Activated B cell treated with CpG ODN at 0.5 μM for 24 hours (primary cell): ENCODE measurements at regions of chr1 and their contacts with region 1.

Region 1: DNA sequence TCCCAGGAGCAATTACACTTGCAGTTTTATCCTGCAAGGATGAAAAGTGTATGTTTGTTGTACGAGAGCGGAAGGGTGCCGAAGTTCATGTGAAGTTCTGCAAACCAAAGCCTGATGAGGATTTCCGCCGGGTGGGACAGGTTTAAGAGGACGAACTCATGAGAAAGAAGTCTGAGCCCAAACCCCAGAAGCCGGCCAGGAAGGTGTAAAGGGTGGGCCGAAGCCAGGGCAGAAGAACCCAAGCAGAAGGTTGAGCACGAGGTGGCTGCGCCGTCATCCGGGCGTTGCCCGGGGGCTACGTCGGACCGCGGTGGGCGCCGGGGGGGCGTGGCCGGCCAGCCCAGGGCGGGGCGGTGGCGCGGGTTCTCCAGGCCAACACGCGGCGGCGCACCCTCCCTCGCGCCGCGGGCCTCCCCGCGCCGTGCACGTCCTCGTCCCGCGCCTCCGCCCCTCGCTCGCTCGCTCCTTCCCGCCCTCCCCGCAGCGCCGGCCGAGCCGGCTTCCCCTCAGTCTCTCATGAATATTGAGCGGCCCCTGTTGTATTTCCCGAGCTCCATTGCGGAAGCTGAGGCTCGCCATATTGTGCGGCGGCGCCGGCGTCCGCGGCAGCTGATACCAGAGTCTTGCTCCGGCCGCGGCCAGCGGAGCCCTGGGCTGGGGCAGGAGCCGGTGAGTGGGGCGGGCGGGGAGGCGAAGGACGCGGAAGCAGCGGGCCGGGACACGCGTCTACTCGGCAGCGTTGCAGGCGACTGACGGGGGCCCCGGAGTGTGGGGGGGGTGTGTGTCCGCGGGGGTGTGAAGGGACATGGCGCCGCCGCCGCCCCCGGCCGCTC is at the start of gene RNF2:
- DNase-seq: peak; percentile 84
- ATAC-seq: peak; percentile 92
- H3K4me3 Mint-ChIP-seq: peak within 1 kb of the TSS; percentile 92
- H3K27ac Mint-ChIP-seq: peak within 1 kb of the TSS; percentile 91
- H3K4me1 Mint-ChIP-seq: peaks cover 31% of the 10 kb centered on the region
- H3K27me3 Mint-ChIP-seq: no peaks in the 10 kb centered on the region
- CTCF ChIP-seq: no peak
- total RNA-seq, gene RNF2: 23.4 and 24.5 TPM in 2 replicates

Region 2: DNA sequence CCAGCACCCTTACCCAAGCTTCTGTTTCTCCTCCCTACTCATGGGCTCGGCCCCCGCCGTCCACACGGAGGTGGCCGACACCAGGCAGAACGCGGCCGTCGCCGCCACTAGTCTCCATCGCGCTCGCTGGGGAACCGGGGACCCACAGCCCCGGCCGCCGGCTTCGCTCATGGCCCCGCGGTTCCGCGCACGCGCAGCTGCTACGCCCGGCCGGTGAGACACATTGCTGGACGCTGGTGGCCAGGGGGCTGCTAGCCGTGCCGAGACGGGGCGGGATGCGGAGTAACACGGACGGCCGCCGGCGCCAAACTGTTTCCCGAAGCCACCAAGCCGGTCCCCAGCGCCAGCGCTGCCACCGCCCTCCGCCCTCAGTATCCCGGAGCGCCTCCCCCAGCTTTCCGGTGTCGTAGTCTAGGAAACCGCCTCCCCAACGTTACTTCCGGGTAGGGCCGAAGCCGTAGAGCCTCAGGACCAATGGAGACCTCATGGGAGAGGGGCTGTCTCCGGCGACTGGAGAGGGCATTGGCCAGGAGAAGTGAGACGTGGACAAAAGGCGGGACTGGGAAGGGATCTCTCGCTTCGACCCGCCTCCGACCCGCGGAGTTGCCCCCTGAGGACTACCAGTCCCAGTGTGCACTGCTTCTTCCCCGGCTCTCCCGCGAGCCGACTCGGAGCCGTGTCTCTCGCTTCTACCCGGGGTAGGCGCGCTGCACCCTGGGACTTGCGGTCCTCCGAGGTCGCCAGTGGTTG is 290.5 kb before region 1 on chr1 and contains the start of gene EDEM3:
- CTCF ChIA-PET with region 1: no interaction called
- POLR2A ChIA-PET with region 1: interaction called, 13 read pairs
- intact Hi-C with region 1: loop called (anchors 1 kb)
- DNase-seq: peak; percentile 90
- ATAC-seq: peak; percentile 95
- H3K4me3 Mint-ChIP-seq: peak within 1 kb of the TSS; percentile 95
- H3K27ac Mint-ChIP-seq: peak within 1 kb of the TSS; percentile 86
- H3K4me1 Mint-ChIP-seq: peaks cover 23% of the 10 kb centered on the region
- H3K27me3 Mint-ChIP-seq: peaks cover under 1% of the 10 kb centered on the region
- CTCF ChIP-seq: no peak
- total RNA-seq, gene EDEM3: 11.5 and 16.2 TPM in 2 replicates

Region 3: DNA sequence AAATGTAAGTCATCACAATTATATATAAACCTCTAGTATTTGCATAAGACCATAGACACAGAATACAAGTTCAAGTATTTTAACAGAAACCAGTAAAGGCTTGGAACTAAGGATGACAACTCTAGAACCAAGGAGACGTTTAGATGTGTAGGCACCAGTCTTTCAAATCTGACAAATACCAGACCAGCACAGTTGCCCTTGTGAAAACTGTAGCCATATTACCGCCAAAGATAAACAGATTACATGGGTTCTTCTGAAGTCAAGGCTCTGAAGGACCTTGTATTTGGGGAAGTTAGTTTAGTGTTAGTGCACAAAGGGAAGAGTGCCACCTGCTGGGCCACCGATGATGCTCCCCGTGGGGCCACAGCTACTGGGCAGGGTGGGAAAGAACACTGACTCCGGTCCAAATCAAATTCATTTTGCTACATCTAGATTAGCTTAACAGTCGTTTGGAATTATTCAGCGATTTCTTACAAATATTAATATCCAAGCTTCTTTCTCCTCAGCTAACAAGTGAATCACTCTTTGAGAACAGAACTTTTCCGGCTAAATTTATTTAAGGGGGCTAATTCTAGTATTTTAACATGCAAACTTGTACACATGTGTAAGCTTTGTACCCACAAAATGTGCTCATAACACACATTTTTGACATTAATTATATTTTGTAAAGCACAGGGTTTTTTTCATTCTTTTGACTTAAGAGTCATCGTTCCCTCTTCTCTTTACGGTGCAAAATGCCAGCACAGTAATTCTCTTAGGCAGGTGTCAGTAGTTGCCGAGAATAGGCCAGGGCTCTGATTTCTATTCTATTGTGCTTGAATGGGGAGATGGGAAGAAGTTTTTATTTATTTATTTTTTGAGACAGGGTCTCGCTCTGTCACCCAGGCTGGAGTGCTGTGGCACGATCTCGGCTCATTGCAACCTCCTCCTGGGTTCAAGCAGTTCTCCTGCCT is 62.9 kb before region 1 on chr1:
- CTCF ChIA-PET with region 1: no interaction called
- POLR2A ChIA-PET with region 1: no interaction called
- intact Hi-C with region 1: loop called (anchors 2 kb)
- DNase-seq: peak; percentile 62
- ATAC-seq: peak; percentile 100
- H3K4me3 Mint-ChIP-seq: no peak overlapping the region
- H3K27ac Mint-ChIP-seq: no peak overlapping the region
- H3K4me1 Mint-ChIP-seq: peaks cover 5% of the 10 kb centered on the region
- H3K27me3 Mint-ChIP-seq: no peaks in the 10 kb centered on the region
- CTCF ChIP-seq: no peak

Region 4: DNA sequence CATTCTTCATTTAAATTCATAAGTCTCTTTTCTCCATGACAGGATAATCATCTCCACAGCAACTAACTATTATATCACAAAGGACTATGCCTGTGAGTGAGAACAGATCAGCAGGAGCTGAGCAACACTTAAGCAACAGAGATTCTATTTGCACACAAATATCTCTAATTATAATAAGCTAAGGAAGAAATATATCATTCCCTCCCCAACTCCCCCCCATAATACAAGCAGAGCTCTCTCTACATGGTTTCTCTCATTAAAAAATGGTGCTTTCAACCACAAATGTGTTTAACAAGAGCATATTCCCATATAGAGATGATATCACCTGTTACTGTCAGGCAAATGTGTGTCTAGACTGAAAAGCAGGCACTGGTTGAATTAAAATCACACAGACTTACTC is 36.4 kb before region 1 on chr1:
- CTCF ChIA-PET with region 1: no interaction called
- POLR2A ChIA-PET with region 1: no interaction called
- intact Hi-C with region 1: no loop called
- DNase-seq: no peak
- ATAC-seq: no peak
- H3K4me3 Mint-ChIP-seq: no peak overlapping the region
- H3K27ac Mint-ChIP-seq: no peak overlapping the region
- H3K4me1 Mint-ChIP-seq: no peaks in the 10 kb centered on the region
- H3K27me3 Mint-ChIP-seq: peaks cover 7% of the 10 kb centered on the region
- CTCF ChIP-seq: no peak

Region 5: DNA sequence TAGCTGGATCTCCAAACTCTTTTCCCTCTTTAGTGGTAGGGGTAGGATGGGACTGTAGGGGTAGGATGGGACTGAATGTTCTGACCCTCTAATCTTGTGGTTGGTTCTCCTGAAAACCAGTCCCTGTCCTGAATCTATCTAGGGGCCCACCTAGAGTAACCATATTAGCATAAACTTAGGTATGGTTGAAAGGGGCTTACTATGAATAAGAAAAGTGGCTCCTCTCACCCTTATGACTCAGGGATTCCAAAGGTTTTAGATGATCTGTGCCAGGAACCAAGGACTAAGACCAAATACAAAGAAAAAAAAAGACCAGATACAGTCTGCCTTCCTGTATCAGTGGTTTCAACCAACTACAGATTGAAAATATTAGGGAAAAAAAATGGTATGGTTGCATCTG is 29.1 kb after region 1 on chr1:
- CTCF ChIA-PET with region 1: no interaction called
- POLR2A ChIA-PET with region 1: no interaction called
- intact Hi-C with region 1: no loop called
- DNase-seq: no peak
- ATAC-seq: no peak
- H3K4me3 Mint-ChIP-seq: no peak overlapping the region
- H3K27ac Mint-ChIP-seq: no peak overlapping the region
- H3K4me1 Mint-ChIP-seq: peaks cover 36% of the 10 kb centered on the region
- H3K27me3 Mint-ChIP-seq: no peaks in the 10 kb centered on the region
- CTCF ChIP-seq: no peak

Region 6: DNA sequence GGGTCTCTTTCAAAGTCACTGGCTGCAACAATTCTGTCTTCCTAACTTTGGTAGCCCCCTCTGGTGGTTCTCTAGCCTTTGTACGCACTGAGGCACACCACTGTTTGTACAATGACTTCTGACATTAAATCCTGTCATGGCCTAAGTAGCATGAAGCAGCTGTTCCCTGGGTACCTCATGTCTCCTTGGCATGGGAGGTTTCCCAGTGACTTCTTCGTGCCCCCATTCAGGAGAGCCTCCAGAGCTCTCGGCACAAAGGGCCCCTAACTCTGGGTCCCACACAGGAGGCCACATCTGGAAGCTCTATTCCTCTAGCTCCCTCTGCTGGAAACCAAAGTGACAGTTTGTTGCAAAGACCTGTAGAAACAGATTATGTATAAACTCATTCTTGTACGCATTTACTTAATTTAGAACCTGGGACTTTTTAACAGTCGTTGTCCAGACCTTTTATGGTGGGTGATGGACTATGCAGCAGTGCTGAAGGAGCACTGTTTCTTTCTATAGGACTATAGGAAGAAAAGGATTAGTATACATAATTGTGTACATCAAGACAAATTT is 125.2 kb after region 1 on chr1:
- CTCF ChIA-PET with region 1: interaction called, 6 read pairs
- POLR2A ChIA-PET with region 1: interaction called, 5 read pairs
- intact Hi-C with region 1: loop called (anchors 1 kb)
- DNase-seq: peak; percentile 30
- ATAC-seq: peak; percentile 83
- H3K4me3 Mint-ChIP-seq: peak overlapping the region; percentile 19
- H3K27ac Mint-ChIP-seq: no peak overlapping the region
- H3K4me1 Mint-ChIP-seq: peaks cover 8% of the 10 kb centered on the region
- H3K27me3 Mint-ChIP-seq: no peaks in the 10 kb centered on the region
- CTCF ChIP-seq: peak; percentile 82

Region 7: GRCh38 chr1:186082235-186082937 is 1037.2 kb after region 1 on chr1:
- CTCF ChIA-PET with region 1: no interaction called
- POLR2A ChIA-PET with region 1: no interaction called
- intact Hi-C with region 1: loop called (anchors 10 kb)
- DNase-seq: peak; percentile 39
- ATAC-seq: peak; percentile 78
- H3K4me3 Mint-ChIP-seq: peak overlapping the region; percentile 38
- H3K27ac Mint-ChIP-seq: peak overlapping the region; percentile 69
- H3K4me1 Mint-ChIP-seq: peaks cover 33% of the 10 kb centered on the region
- H3K27me3 Mint-ChIP-seq: no peaks in the 10 kb centered on the region
- CTCF ChIP-seq: no peak